Adrenal gland (tissue), 19 donors: ENCODE measurements at regions of chr7 and their contacts with region 1.

Region 1: DNA sequence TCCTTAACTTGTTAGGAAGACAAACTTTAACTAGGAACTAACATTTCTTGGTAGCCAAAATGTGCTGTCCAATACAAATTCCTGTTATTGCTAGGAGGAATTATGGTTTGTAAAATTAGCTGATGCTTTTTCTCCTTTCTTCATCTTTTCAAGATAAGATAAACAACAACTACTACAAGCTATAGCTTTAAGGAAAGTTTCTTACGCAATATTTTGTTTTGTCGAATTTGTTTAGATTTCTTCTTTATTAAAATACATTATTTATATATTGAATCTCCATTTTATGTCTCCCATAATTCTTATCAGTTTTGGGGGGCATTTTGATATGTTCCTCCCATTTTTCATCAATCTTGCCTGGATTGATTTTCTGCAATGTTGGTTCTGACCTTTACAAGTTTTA is 277.5 kb downstream of the SUGCT start:
- DNase-seq: no peak
- H3K4me3 ChIP-seq: no peak overlapping the region
- H3K27ac ChIP-seq: no peak overlapping the region
- H3K4me1 ChIP-seq: no peaks in the 10 kb centered on the region
- H3K27me3 ChIP-seq: no peaks in the 10 kb centered on the region
- CTCF ChIP-seq: no peak
- POLR2A ChIP-seq: no peak

Region 2: GRCh38 chr7:40093631-40094350 is 318.5 kb before region 1 on chr7:
- intact Hi-C with region 1: no loop called
- DNase-seq: peak; percentile 32 to 71 (median 59)
- H3K4me3 ChIP-seq: no peak overlapping the region
- H3K27ac ChIP-seq: peak overlapping the region in 4 of 5 donors; percentile 38 to 85 (median 83)
- H3K4me1 ChIP-seq: peaks cover 20 to 48% of the 10 kb centered on the region in 2 donors
- H3K27me3 ChIP-seq: no peaks in the 10 kb centered on the region
- CTCF ChIP-seq: no peak
- POLR2A ChIP-seq: no peak

Region 3: GRCh38 chr7:40474790-40475680 is 62.7 kb after region 1 on chr7:
- intact Hi-C with region 1: loop called in 1 of 2 experiments (anchors 5 kb)
- DNase-seq: no peak
- H3K4me3 ChIP-seq: no peak overlapping the region
- H3K27ac ChIP-seq: no peak overlapping the region
- H3K4me1 ChIP-seq: no peaks in the 10 kb centered on the region
- H3K27me3 ChIP-seq: no peaks in the 10 kb centered on the region
- CTCF ChIP-seq: no peak
- POLR2A ChIP-seq: no peak